Common myeloid progenitor, CD34-positive (primary cell): ENCODE measurements at regions of chr11 and their contacts with region 1.

Region 1: DNA sequence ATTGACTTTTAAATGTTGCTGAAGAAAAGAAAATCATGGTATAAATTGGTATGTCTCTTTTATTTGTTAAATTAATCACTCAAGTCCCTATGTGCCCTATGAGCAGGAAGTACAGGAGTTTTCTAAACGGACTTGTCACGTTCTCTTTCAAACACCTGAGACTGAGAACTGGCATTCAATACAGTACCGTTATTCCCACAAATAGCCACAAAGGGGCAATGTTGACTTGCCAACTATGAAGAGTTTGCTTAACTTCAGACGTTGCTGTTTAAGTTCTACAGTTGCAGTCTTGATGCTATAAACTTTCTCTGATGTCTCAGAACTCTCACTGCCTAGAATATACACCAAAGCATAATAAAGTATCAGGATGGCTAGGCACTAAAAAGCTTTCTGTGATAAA is 7.6 kb downstream of the OR56A1 start:
- DNase-seq: peak; percentile 52 to 76 (median 75)
- H3K4me3 ChIP-seq: no peak overlapping the region
- H3K27ac ChIP-seq: no peak overlapping the region
- H3K4me1 ChIP-seq: no peaks in the 10 kb centered on the region
- H3K27me3 ChIP-seq: peaks cover 4 to 23% (median 9%) of the 10 kb centered on the region in 5 experiments

Region 2: GRCh38 chr11:6062691-6063358 is 39.9 kb after region 1 on chr11:
- CTCF ChIA-PET with region 1: no interaction called
- POLR2A ChIA-PET with region 1: no interaction called
- DNase-seq: no peak
- H3K4me3 ChIP-seq: no peak overlapping the region
- H3K27ac ChIP-seq: no peak overlapping the region
- H3K4me1 ChIP-seq: no peaks in the 10 kb centered on the region
- H3K27me3 ChIP-seq: peaks cover 0 to 4% (median 0%) of the 10 kb centered on the region in 5 experiments

Region 3: GRCh38 chr11:6315811-6316425 is 293.0 kb after region 1 on chr11:
- CTCF ChIA-PET with region 1: interaction called, 35 read pairs
- POLR2A ChIA-PET with region 1: no interaction called
- DNase-seq: peak; percentile 51 to 73 (median 73)
- H3K4me3 ChIP-seq: no peak overlapping the region
- H3K27ac ChIP-seq: no peak overlapping the region
- H3K4me1 ChIP-seq: peaks cover 0 to 20% (median 16%) of the 10 kb centered on the region in 4 experiments
- H3K27me3 ChIP-seq: peaks cover 24 to 45% (median 32%) of the 10 kb centered on the region in 5 experiments

Region 4: DNA sequence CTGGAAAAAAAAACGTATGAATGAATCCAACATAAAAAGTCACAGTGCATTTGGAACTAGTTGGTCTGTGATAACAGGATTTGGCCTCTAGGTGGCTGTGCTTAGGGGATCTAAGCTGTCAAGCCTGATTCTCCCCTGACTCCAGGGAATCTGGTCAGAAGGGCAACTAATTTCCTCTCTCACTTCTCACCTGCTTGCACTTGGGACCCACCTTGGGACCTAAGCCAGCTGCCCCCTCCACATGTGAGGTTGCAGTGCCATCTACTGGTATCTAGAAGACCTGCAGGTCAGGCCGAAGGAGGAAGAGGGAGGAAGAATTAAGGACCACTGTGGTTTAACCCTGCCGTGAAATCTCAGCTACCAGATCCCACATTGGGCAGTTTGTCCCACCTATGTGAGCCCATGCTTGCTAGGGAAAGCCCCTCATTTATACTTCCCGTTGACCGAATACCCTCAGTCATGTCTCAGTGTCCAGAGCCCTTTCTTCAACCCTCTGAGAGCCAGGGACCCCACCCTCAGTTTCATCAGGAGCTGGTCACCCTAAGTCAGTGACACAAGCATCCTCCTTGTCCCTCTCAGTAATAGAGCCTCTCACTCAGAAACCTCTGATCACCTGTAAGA is 330.5 kb after region 1 on chr11:
- CTCF ChIA-PET with region 1: interaction called, 10 read pairs
- POLR2A ChIA-PET with region 1: no interaction called
- DNase-seq: peak; percentile 42 to 61 (median 61)
- H3K4me3 ChIP-seq: no peak overlapping the region
- H3K27ac ChIP-seq: no peak overlapping the region
- H3K4me1 ChIP-seq: no peaks in the 10 kb centered on the region
- H3K27me3 ChIP-seq: peaks cover 0 to 3% (median 0%) of the 10 kb centered on the region in 5 experiments

Region 5: DNA sequence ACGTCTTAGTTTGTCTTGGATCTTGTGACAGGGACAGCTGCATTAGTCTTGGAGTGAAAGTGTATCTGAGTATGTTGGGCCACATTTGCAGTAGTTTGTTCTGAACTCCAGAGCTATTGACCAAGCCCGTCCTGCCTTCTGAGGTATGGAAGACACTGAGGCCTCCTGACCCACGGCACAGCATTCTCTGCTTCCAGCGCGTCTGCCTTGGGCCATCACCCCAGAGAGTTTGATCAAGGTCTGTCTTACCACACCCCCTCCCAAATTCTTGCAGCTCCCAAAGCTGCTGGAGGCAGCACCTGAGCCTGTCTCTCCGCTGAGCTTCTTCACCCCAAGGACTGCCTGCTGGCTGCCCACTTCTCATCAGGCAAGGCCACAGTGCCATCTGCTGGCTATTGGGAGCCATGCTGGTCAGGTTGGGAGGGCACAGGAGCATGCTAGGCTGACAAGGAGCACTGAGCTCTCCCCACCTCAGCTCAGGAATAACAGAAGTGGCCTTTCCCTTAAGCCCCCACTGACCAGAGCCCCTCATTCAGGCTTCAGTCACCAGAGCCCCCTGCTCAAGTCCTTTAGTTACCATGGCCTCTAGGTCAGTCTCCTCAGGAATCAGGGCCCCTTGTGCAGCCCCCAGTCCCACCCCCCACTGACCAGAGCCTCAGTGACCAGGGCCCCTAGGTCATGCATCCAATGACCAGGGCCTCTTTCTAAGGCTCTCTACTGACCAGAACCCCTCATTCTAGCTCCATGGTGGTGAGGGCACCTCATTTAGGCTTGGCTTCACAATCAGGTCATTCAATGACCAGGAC is 340.1 kb after region 1 on chr11:
- CTCF ChIA-PET with region 1: interaction called, 22 read pairs
- POLR2A ChIA-PET with region 1: no interaction called
- DNase-seq: peak; percentile 51 to 79 (median 74)
- H3K4me3 ChIP-seq: no peak overlapping the region
- H3K27ac ChIP-seq: no peak overlapping the region
- H3K4me1 ChIP-seq: no peaks in the 10 kb centered on the region
- H3K27me3 ChIP-seq: peaks cover 0 to 2% (median 0%) of the 10 kb centered on the region in 5 experiments